Right cardiac atrium (tissue), 5 donors: ENCODE measurements at regions of chr6 and their contacts with region 1.

Region 1: DNA sequence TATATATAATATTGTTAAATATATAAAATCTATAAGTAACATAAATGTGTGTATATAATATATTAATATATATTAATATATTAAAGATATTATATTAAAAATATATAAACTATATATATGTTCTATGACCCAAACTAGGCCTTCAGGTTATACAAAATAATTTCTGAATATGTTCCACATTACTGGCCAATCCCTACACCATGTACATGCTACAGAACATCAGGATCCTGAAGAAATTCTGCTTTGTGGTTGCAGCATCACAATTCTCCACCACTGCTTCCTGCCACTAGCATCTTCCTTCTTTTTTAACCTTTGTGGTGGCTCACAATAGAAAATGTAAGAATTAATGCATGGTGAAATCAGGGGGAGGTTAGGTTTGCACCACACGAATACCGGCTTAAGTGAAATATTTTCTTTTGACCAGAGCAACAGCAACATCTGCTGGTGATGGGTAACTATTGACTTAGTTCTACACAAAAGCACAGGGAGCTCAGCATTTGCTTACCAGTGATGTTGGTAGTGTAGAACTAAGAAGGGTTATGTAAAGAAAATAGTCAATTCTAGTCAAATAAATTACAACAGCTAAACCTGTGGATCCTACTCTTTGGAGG is 280.6 kb downstream of the SYNE1 start:
- DNase-seq: no peak
- ATAC-seq: peak in 1 of 2 donors; percentile 60
- H3K4me3 ChIP-seq: no peak overlapping the region
- H3K27ac ChIP-seq: no peak overlapping the region
- H3K4me1 ChIP-seq: no peaks in the 10 kb centered on the region
- H3K27me3 ChIP-seq: no peaks in the 10 kb centered on the region

Region 2: GRCh38 chr6:152146385-152146784 is 210.2 kb before region 1 on chr6:
- intact Hi-C with region 1: loop called in 1 of 4 experiments (anchors 5 kb)
- DNase-seq: no peak
- ATAC-seq: no peak
- H3K4me3 ChIP-seq: no peak overlapping the region
- H3K27ac ChIP-seq: no peak overlapping the region
- H3K4me1 ChIP-seq: no peaks in the 10 kb centered on the region
- H3K27me3 ChIP-seq: no peaks in the 10 kb centered on the region